ENCODE measurements at regions of chr5 and their contacts with region 1.

Region 1: DNA sequence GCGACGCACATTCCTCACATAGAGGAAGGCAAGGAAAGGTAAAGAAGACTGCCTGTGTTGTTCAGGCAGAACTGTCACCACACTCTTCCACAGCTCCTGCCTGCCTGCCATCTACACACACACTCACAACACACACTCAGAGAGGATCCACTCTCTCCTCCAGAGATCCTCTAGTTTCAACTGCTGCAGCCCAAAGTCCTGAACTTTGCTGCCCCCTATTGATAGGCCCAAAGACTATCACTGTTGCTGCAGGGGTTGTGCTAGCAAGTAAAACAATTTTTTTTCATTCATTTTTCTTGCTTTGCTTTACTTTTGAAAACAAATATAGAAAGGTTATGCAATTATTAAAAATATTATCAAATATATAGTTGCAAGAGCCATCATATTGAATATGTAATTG is 5.9 kb upstream of the CFAP90 start:
- DNase-seq: peak; percentile 27
- H3K4me3 Mint-ChIP-seq: no peak overlapping the region
- H3K27ac Mint-ChIP-seq: no peak overlapping the region
- H3K4me1 Mint-ChIP-seq: peaks cover 33% of the 10 kb centered on the region
- H3K27me3 Mint-ChIP-seq: peaks cover 8% of the 10 kb centered on the region

Region 2: GRCh38 chr5:6765612-6766525 is 1091.0 kb before region 1 on chr5:
- intact Hi-C with region 1: loop called (anchors 10 kb)
- DNase-seq: peak; percentile 69
- H3K4me3 Mint-ChIP-seq: no peak overlapping the region
- H3K27ac Mint-ChIP-seq: peak overlapping the region; percentile 17
- H3K4me1 Mint-ChIP-seq: peaks cover 5% of the 10 kb centered on the region
- H3K27me3 Mint-ChIP-seq: no peaks in the 10 kb centered on the region

Region 3: GRCh38 chr5:7762267-7762666 is 94.6 kb before region 1 on chr5:
- intact Hi-C with region 1: no loop called
- DNase-seq: no peak
- H3K4me3 Mint-ChIP-seq: no peak overlapping the region
- H3K27ac Mint-ChIP-seq: no peak overlapping the region
- H3K4me1 Mint-ChIP-seq: no peaks in the 10 kb centered on the region
- H3K27me3 Mint-ChIP-seq: no peaks in the 10 kb centered on the region

Region 4: DNA sequence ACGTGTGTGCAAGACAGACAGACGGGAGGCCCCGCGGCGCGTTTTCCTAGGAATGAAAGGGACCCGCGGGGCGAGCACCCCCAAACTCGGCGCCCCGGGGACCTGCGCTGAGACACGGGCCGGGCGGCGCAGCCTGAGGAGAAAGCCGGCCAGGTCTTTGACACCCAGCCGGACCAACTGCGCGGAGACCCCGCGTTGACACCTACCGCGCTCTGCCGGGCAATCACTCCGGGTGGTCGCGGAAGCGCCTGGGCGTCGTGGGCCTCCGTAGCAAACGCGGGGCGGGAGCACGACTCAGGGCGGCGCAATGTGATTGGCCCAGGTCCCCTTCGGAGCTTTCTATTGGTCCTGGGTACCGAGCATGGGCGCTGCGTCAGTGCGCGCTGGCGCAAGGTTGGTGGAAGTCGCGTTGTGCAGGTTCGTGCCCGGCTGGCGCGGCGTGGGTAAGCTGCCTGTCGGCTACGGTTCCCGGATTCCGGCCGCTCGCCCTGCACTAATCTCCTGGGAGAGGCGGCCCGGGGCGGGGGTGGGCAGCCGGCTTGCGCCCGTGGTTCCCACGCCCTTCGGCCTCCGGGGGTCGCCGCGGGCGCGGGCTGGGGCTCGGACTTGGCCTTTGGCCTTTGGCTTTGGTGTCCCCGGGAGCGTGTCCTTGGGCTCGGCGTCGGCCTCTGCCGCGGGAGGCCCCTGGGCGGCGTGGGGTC is 12.1 kb after region 1 on chr5 and contains the starts of genes FASTKD3 and MTRR:
- intact Hi-C with region 1: loop called (anchors 1 kb)
- DNase-seq: peak; percentile 87
- H3K4me3 Mint-ChIP-seq: peak within 1 kb of the TSS; percentile 99
- H3K27ac Mint-ChIP-seq: peak within 1 kb of the TSS; percentile 83
- H3K4me1 Mint-ChIP-seq: peaks cover 62% of the 10 kb centered on the region
- H3K27me3 Mint-ChIP-seq: no peaks in the 10 kb centered on the region
- total RNA-seq, gene FASTKD3: 11.6 and 12.7 TPM in 2 replicates
- total RNA-seq, gene MTRR: 61.9 and 71.4 TPM in 2 replicates

Region 5: GRCh38 chr5:7897014-7897632 is 40.3 kb after region 1 on chr5:
- intact Hi-C with region 1: loop called (anchors 5 kb)
- DNase-seq: no peak
- H3K4me3 Mint-ChIP-seq: no peak overlapping the region
- H3K27ac Mint-ChIP-seq: no peak overlapping the region
- H3K4me1 Mint-ChIP-seq: peaks cover 26% of the 10 kb centered on the region
- H3K27me3 Mint-ChIP-seq: no peaks in the 10 kb centered on the region

Measured in activated T-helper 2 cell treated with anti-CD3 and anti-CD28 coated beads, Interferon-gamma antibody, Interleukin-2, Interleukin-4, amounts not matched to agents 10 μg/mL and 5 μg/mL and 100 μg/mL, durations not matched to agents 14 hours and 24 hours and 36 hours (primary cell).